ENCODE measurements at regions of chr1 and their contacts with region 1.

Region 1: GRCh38 chr1:183368202-183369108 is 49.7 kb downstream of the NMNAT2 start:
- DNase-seq: no peak
- H3K4me3 ChIP-seq: no peak overlapping the region
- H3K27ac ChIP-seq: no peak overlapping the region
- H3K4me1 ChIP-seq: peaks cover 79% of the 10 kb centered on the region
- H3K27me3 ChIP-seq: no peaks in the 10 kb centered on the region
- CTCF ChIP-seq: no peak

Region 2: DNA sequence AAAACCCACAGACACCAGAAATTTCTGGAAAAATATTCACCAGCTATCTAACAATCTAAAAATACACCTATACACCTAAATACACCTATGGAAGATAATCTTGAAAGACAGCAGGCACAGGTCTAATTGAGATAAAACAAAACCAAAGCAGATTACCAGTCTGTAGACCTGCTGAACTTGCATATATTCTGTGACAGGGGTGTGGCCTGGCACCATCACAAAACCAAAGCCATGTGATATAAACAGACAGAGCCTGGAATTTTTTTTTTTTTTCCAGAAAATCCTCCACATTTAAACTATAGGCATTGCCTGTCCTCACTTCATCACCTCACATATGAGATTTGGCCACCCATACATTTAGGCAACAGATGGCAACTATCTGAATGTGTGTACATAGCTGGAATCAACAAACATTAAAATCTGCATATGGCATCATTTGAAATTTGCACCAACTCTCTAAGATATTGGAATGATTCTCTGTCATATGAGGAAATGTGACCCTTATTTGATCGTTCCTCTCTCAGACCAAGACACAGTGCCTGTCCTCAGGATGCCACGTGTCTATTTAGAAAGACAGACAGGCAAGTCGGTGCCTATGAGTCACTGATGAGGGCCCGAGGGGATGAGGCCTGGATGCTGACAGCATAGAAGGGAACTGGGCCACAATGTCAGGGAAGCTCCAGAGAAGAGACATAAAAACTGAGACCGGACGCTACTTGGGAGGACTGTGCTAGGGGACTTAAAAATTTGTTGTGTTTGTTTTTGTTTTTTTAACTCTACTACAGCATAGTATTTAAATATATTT is 17.1 kb after region 1 on chr1:
- CTCF ChIA-PET with region 1: no interaction called
- POLR2A ChIA-PET with region 1: no interaction called
- intact Hi-C with region 1: no loop called
- DNase-seq: no peak
- H3K4me3 ChIP-seq: no peak overlapping the region
- H3K27ac ChIP-seq: no peak overlapping the region
- H3K4me1 ChIP-seq: no peaks in the 10 kb centered on the region
- H3K27me3 ChIP-seq: no peaks in the 10 kb centered on the region
- CTCF ChIP-seq: no peak

Region 3: GRCh38 chr1:183404456-183404855 is 36.0 kb after region 1 on chr1:
- CTCF ChIA-PET with region 1: no interaction called
- POLR2A ChIA-PET with region 1: no interaction called
- intact Hi-C with region 1: no loop called
- DNase-seq: no peak
- H3K4me3 ChIP-seq: no peak overlapping the region
- H3K27ac ChIP-seq: no peak overlapping the region
- H3K4me1 ChIP-seq: no peaks in the 10 kb centered on the region
- H3K27me3 ChIP-seq: no peaks in the 10 kb centered on the region
- CTCF ChIP-seq: no peak

Region 4: GRCh38 chr1:183590244-183591191 is 222.1 kb after region 1 on chr1 and contains the start of gene NCF2:
- CTCF ChIA-PET with region 1: interaction called, 10 read pairs
- POLR2A ChIA-PET with region 1: no interaction called
- intact Hi-C with region 1: no loop called
- DNase-seq: peak; percentile 8 to 64
- H3K4me3 ChIP-seq: peak within 1 kb of the TSS; percentile 37; the same call in 1 of the 2 replicates
- H3K27ac ChIP-seq: peak within 1 kb of the TSS; percentile 82
- H3K4me1 ChIP-seq: peaks cover 32% of the 10 kb centered on the region
- H3K27me3 ChIP-seq: no peaks in the 10 kb centered on the region
- CTCF ChIP-seq: no peak
- total RNA-seq, gene NCF2: 54.3 and 65.5 TPM in 2 replicates

Measured in PC-9 (cell line).